ENCODE measurements at regions of chr3 and their contacts with region 1.

Region 1: DNA sequence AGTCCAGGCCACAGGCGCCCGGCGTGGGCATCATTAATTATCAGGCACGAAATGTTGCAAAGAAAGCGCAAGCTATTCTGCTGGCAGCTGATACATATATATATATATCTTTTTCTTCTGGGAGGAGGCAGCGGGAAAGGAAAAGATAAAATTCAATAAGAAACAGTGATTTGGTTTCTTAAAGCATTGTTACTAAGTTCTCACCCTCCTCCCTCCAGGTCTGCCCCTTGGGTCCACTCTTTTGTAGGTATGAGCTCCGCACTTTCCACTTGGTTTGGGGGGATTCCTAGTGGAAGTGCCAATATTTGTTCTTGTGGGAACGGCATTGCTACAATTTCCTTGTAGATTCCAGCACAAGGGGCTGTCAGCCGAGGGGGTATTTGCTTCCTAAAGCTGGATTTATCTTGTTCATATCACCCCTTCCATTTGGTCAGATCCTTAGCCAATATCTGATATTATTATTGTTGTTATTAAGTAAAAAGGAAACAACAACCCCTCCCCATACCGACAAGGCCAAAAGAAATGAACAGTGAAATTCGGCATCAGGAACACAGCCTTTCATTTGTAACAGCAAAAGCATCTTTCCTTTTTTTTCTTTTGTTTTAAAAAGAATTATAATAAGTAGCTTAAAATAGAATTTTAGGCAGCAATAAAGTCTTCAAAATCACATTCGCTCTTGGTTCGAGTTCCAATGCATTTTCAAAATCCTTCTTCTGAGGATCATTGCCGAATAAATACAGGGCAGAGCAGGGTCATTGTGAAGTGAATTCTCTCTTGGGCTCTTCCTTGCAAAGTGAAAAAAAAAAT is 15.6 kb downstream of the ZIC1 start:
- DNase-seq: no peak
- ATAC-seq: no peak
- H3K4me3 ChIP-seq: no peak overlapping the region
- H3K4me3 Mint-ChIP-seq: no peak overlapping the region
- H3K27ac ChIP-seq: no peak overlapping the region
- H3K27ac Mint-ChIP-seq: no peak overlapping the region
- H3K4me1 ChIP-seq: no peaks in the 10 kb centered on the region
- H3K4me1 Mint-ChIP-seq: peaks cover 3% of the 10 kb centered on the region
- H3K27me3 ChIP-seq: peaks cover 17 to 19% of the 10 kb centered on the region in 2 experiments
- H3K27me3 Mint-ChIP-seq: peaks cover 45% of the 10 kb centered on the region
- CTCF ChIP-seq: no peak

Region 2: DNA sequence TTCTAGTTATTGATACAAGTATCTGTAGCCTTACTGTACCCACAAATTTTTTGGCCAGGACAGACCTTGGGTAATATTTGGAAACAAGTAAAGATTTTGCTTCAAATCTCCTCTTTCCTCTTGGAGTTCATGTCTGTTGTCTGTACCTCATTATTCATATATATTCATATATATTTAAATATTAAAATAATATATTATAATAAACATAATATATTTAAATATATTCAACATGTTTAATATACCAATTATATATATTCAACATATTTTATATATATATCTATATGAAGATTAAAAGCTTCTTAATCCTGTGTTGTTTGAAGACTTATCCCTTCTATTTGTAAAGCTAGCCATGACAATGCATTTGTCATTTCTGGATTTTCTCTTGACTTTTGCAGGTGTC is 22.4 kb after region 1 on chr3:
- CTCF ChIA-PET with region 1: no interaction called
- POLR2A ChIA-PET with region 1: no interaction called
- intact Hi-C with region 1: no loop called
- DNase-seq: no peak
- ATAC-seq: no peak
- H3K4me3 ChIP-seq: no peak overlapping the region
- H3K4me3 Mint-ChIP-seq: no peak overlapping the region
- H3K27ac ChIP-seq: no peak overlapping the region
- H3K27ac Mint-ChIP-seq: no peak overlapping the region
- H3K4me1 ChIP-seq: no peaks in the 10 kb centered on the region
- H3K4me1 Mint-ChIP-seq: no peaks in the 10 kb centered on the region
- H3K27me3 ChIP-seq: no peaks in the 10 kb centered on the region
- H3K27me3 Mint-ChIP-seq: no peaks in the 10 kb centered on the region
- CTCF ChIP-seq: no peak

Region 3: GRCh38 chr3:148778926-148779325 is 1354.1 kb after region 1 on chr3:
- CTCF ChIA-PET with region 1: no interaction called
- POLR2A ChIA-PET with region 1: no interaction called
- intact Hi-C with region 1: loop called in 1 of 2 experiments (anchors 5 kb)
- DNase-seq: no peak
- ATAC-seq: no peak
- H3K4me3 ChIP-seq: no peak overlapping the region
- H3K4me3 Mint-ChIP-seq: no peak overlapping the region
- H3K27ac ChIP-seq: no peak overlapping the region
- H3K27ac Mint-ChIP-seq: no peak overlapping the region
- H3K4me1 ChIP-seq: no peaks in the 10 kb centered on the region
- H3K4me1 Mint-ChIP-seq: no peaks in the 10 kb centered on the region
- H3K27me3 ChIP-seq: no peaks in the 10 kb centered on the region
- H3K27me3 Mint-ChIP-seq: no peaks in the 10 kb centered on the region
- CTCF ChIP-seq: no peak

Measured in CD8-positive, alpha-beta T cell (primary cell).